ENCODE measurements at regions of chr16 and their contacts with region 1.

Region 1: GRCh38 chr16:81808933-81809496 is 29.9 kb downstream of the PLCG2 start:
- DNase-seq: peak; percentile 56
- ATAC-seq: peak; percentile 79
- H3K4me3 Mint-ChIP-seq: peak overlapping the region; percentile 65
- H3K27ac Mint-ChIP-seq: peak overlapping the region; percentile 92
- H3K4me1 Mint-ChIP-seq: peaks cover 98% of the 10 kb centered on the region
- H3K27me3 Mint-ChIP-seq: no peaks in the 10 kb centered on the region
- CTCF ChIP-seq: no peak

Region 2: DNA sequence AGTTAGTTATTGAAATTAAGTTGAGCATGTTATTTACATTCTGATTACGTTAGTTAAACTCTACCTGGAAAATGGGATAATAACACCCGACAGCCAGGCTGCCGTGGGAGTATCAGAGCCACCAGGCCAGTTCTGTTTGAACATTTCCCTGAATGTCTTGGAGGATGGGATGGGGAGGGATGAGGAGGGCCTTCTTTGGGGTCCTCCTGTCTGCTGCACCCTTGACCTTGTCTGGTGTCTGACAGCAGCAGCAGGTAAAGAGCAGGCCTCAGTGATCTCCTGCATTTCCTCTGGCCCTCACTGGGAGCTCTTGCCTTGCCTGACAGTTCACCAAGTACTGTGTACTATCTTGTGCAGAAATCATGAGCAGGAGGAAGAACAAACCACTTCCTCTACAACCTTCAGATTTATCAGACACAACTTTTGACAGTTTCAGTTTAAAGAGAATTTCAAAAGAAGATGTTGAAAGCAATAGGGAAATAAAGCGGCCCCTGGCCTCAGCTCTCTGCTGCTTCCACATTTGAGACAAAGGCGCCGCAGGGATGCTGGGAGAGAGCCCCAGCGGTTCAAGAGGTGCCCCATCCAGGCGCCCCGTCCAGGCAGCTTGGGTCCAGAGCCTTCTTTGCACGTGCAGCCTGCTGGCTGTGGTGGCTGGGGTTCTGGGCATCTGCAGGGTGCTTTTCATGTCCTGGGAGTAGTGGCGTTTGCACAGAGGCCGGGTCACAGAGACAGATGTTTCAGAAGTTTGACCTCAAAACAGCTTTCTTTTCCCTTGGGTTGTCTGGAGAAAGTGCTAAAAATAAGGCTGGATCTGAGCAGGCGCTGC is 339.1 kb before region 1 on chr16:
- CTCF ChIA-PET with region 1: no interaction called
- POLR2A ChIA-PET with region 1: no interaction called
- intact Hi-C with region 1: no loop called
- DNase-seq: no peak
- ATAC-seq: peak; percentile 88
- H3K4me3 Mint-ChIP-seq: peak overlapping the region; percentile 66
- H3K27ac Mint-ChIP-seq: peak overlapping the region; percentile 84
- H3K4me1 Mint-ChIP-seq: peaks cover 82% of the 10 kb centered on the region
- H3K27me3 Mint-ChIP-seq: no peaks in the 10 kb centered on the region
- CTCF ChIP-seq: no peak

Region 3: GRCh38 chr16:81551151-81551808 is 257.7 kb before region 1 on chr16:
- CTCF ChIA-PET with region 1: no interaction called
- POLR2A ChIA-PET with region 1: no interaction called
- intact Hi-C with region 1: no loop called
- DNase-seq: no peak
- ATAC-seq: no peak
- H3K4me3 Mint-ChIP-seq: no peak overlapping the region
- H3K27ac Mint-ChIP-seq: no peak overlapping the region
- H3K4me1 Mint-ChIP-seq: peaks cover 51% of the 10 kb centered on the region
- H3K27me3 Mint-ChIP-seq: no peaks in the 10 kb centered on the region
- CTCF ChIP-seq: no peak

Region 4: DNA sequence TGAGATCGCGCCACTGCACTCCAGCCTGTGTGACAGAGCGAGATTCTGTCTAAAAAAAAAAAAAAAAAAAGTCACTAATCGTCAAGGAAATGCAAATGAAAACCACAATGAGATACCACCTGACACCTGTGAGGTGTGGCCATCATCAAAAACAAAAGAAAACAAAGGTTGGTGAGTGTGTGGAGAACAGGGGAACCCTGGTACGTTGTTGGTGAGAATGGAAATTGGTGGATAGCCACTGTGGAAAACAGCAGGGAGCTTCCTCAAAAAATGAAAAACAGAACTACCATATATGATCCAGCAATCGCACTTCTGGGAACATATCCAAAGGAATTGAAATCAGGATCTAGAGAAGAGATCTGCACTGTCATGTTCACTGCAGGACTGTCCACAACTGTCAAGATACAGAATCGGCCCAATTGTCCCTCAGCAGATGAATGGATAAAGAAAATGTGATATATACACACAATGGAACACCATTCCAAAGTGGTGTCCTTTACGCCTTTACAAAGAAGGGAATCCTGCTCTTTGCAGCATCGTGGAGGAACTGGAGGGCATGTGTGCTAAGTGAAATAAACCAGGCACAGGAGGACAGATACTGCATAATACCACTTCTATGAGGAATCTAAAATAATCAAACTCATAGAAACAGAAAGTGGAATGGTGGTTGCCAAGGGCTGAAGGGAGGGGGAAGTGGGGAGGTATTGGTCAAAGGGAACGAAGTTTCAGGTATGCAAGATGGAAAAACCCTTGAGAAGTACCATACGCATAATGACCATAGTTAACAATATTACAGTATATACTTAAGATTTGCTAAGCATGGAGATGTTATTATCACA is 93.4 kb before region 1 on chr16:
- CTCF ChIA-PET with region 1: no interaction called
- POLR2A ChIA-PET with region 1: interaction called, 14 read pairs
- intact Hi-C with region 1: no loop called
- DNase-seq: no peak
- ATAC-seq: peak; percentile 67
- H3K4me3 Mint-ChIP-seq: peak overlapping the region; percentile 75
- H3K27ac Mint-ChIP-seq: peak overlapping the region; percentile 89
- H3K4me1 Mint-ChIP-seq: peaks cover 49% of the 10 kb centered on the region
- H3K27me3 Mint-ChIP-seq: no peaks in the 10 kb centered on the region
- CTCF ChIP-seq: no peak

Region 5: DNA sequence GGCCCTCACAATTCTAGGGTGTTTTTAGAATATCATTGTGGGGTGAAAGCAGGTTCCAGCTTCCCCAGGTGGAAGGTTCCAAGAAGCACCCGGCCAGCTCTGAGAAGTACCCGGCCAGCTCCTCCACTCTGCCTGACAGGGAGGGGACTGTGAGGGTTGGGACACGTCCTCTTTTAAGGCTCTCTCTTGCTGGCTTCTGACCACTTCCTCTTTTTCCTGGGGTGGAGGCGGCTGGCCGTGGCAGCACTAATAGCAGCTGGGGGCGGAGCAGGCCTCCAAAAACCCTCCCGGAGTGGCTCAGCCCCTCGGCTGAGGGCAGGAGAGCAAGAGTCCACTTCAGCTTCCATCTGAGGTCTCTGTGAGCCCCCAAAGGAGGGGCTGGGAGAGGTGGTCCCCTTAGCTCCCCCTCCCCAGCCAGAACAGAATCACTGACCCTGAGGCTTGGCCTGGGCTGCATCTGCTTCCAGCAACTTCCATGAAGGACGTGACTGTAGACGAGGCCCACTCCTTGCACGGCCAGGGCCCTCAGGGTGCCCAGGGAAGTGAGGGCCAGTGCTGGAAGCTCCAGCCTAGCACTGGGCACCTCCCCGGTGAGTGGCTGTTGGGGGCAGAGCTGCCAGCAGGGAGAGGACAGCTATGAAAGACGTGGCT is 56.7 kb before region 1 on chr16:
- CTCF ChIA-PET with region 1: interaction called, 5 read pairs
- POLR2A ChIA-PET with region 1: interaction called, 20 read pairs
- intact Hi-C with region 1: no loop called
- DNase-seq: peak; percentile 70
- ATAC-seq: peak; percentile 92
- H3K4me3 Mint-ChIP-seq: peak overlapping the region; percentile 46
- H3K27ac Mint-ChIP-seq: peak overlapping the region; percentile 82
- H3K4me1 Mint-ChIP-seq: peaks cover 82% of the 10 kb centered on the region
- H3K27me3 Mint-ChIP-seq: no peaks in the 10 kb centered on the region
- CTCF ChIP-seq: no peak

Region 6: DNA sequence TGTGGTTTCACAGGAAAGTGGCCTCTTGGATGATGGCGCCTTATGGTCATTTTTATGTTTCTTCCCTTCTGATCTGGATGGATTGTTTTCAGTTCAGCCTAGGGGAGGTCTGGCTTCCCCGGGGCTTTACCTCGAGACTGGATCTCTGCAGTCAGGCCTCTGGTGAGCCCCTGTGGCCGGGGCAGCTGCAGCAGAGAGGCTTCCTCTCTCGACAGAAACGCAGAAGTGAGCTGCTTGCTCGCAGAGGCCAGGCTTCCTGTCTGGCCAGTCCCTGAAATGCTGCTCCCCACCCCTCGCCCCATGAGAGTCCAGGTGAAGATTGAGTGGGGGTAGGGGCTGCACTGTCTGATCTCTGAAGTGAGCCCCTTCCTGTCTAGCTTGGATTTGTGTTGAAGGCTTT is 14.1 kb after region 1 on chr16:
- CTCF ChIA-PET with region 1: interaction called, 8 read pairs
- POLR2A ChIA-PET with region 1: interaction called, 194 read pairs
- intact Hi-C with region 1: loop called (anchors 1 kb)
- DNase-seq: peak; percentile 67
- ATAC-seq: peak; percentile 65
- H3K4me3 Mint-ChIP-seq: peak overlapping the region; percentile 80
- H3K27ac Mint-ChIP-seq: peak overlapping the region; percentile 97
- H3K4me1 Mint-ChIP-seq: peaks cover 99% of the 10 kb centered on the region
- H3K27me3 Mint-ChIP-seq: no peaks in the 10 kb centered on the region
- CTCF ChIP-seq: no peak

Region 7: GRCh38 chr16:81831722-81832126 is 22.7 kb after region 1 on chr16:
- CTCF ChIA-PET with region 1: interaction called, 8 read pairs
- POLR2A ChIA-PET with region 1: interaction called, 160 read pairs
- intact Hi-C with region 1: no loop called
- DNase-seq: peak; percentile 69
- ATAC-seq: peak; percentile 69
- H3K4me3 Mint-ChIP-seq: peak overlapping the region; percentile 77
- H3K27ac Mint-ChIP-seq: peak overlapping the region; percentile 97
- H3K4me1 Mint-ChIP-seq: peaks cover 96% of the 10 kb centered on the region
- H3K27me3 Mint-ChIP-seq: no peaks in the 10 kb centered on the region
- CTCF ChIP-seq: no peak

Region 8: DNA sequence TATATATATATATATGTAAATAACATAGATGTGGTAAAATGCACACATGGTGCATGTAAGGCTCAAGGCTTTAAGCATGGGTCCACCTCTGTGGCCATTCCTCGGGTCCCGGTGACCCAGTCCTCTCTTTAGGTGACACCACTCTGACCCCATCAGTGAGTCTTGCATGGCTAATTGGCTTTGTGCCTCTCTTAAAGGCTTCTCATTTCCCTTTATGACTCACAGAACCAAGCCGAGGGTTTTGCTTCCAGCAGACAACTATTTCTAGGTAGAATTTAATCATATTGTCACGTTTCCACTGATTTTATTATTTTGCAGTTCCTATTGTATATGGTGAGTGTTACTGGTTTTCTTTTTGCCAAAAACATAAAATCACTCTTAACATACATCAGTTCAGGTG is 29.8 kb after region 1 on chr16:
- CTCF ChIA-PET with region 1: interaction called, 3 read pairs
- POLR2A ChIA-PET with region 1: interaction called, 31 read pairs
- intact Hi-C with region 1: loop called (anchors 1 kb)
- DNase-seq: no peak
- ATAC-seq: peak; percentile 38
- H3K4me3 Mint-ChIP-seq: peak overlapping the region; percentile 73
- H3K27ac Mint-ChIP-seq: peak overlapping the region; percentile 93
- H3K4me1 Mint-ChIP-seq: peaks cover 96% of the 10 kb centered on the region
- H3K27me3 Mint-ChIP-seq: no peaks in the 10 kb centered on the region
- CTCF ChIP-seq: no peak

Region 9: DNA sequence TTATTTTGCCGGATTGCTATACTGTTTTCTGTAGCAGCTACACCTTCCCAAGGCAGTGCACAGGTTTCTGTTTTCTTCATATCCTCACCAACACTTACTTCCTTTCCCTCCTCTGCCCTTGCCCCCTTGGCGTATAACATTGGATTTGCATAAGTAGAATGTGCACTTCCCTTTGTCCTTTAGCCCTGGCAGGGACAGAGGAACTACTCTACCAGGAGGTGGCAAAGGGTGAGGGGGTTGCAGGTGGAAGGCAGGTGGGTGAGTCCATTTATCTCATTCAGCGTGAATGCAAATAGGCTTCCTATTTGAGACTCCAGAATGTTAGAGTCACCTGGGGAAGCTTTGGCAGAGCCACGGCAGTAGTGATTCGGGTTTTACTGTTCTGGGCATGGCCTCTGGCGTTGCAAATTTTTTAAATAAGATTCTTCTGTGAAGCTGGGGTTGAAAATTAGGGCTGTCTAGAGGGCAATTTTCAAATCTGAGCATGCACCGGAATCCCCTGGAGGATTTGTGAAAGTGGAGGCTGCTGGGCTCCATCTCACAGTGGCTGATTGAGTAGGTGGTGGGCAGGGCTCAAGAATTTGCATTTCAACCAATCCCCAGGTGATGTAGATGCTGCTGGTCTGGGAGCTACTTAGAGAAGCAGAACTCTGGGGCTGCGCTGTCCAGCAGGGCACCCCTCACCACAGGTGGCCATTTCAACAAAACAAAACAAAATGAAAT is 54.8 kb after region 1 on chr16:
- CTCF ChIA-PET with region 1: no interaction called
- POLR2A ChIA-PET with region 1: interaction called, 12 read pairs
- intact Hi-C with region 1: no loop called
- DNase-seq: no peak
- ATAC-seq: peak; percentile 73
- H3K4me3 Mint-ChIP-seq: peak overlapping the region; percentile 71
- H3K27ac Mint-ChIP-seq: peak overlapping the region; percentile 88
- H3K4me1 Mint-ChIP-seq: peaks cover 74% of the 10 kb centered on the region
- H3K27me3 Mint-ChIP-seq: no peaks in the 10 kb centered on the region
- CTCF ChIP-seq: no peak

Region 10: GRCh38 chr16:81946206-81946605 is 137.2 kb after region 1 on chr16:
- CTCF ChIA-PET with region 1: no interaction called
- POLR2A ChIA-PET with region 1: no interaction called
- intact Hi-C with region 1: no loop called
- DNase-seq: no peak
- ATAC-seq: no peak
- H3K4me3 Mint-ChIP-seq: no peak overlapping the region
- H3K27ac Mint-ChIP-seq: no peak overlapping the region
- H3K4me1 Mint-ChIP-seq: no peaks in the 10 kb centered on the region
- H3K27me3 Mint-ChIP-seq: no peaks in the 10 kb centered on the region
- CTCF ChIP-seq: no peak

Region 11: DNA sequence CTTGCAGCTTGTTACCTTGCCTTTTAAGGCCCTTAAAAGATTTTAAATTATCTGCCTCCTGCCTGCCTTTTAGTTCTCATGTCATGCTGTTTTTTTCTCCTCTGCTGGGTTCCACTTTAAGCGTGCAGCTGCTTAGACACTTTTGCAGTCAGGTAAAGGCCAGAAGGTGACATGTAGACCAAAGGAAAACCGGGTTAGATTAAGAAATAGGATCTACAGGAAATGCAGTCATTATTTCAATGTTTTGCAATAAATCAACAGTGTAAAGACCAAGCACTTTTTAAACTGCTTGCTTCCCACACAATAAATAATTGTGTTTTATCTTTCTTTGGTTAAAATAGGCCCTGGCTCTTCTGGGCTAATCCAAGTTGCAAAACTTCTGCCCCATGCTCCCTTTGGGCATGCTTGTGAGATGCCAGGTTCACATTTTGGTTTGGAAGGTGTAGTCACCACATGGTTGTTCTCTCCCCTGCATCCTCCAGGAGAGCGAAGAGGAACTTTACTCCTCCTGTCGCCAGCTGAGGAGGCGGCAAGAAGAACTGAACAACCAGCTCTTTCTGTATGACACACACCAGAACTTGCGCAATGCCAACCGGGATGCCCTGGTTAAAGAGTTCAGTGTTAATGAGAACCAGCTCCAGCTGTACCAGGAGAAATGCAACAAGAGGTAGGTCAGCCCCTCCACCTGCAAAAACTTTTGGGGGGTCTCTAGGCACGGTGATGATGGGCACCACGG is 147.4 kb after region 1 on chr16:
- CTCF ChIA-PET with region 1: no interaction called
- POLR2A ChIA-PET with region 1: no interaction called
- intact Hi-C with region 1: no loop called
- DNase-seq: no peak
- ATAC-seq: no peak
- H3K4me3 Mint-ChIP-seq: no peak overlapping the region
- H3K27ac Mint-ChIP-seq: no peak overlapping the region
- H3K4me1 Mint-ChIP-seq: no peaks in the 10 kb centered on the region
- H3K27me3 Mint-ChIP-seq: no peaks in the 10 kb centered on the region
- CTCF ChIP-seq: no peak